ENCODE measurements at regions of chr5 and their contacts with region 1.

Region 1: DNA sequence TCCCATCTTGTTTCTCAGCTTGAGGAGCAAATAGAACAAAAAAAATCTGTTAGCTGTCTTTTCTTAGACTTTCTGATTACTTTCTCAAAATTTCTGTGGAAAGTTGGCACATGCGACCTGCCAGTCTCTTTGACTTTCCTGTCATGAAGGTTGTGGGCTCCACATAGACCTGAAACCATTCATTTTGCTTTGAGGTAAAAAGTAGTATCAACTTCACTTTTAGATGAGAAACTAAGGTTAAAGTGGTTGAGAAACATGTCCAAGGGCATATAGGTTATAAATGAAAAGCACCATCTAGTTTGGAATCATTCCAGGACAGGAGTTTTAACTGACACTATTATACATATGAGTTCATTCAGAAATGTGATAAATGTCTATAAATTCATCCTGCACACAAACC is 42.7 kb downstream of the ST8SIA4 start:
- DNase-seq: no peak
- ATAC-seq: peak; percentile 63
- H3K4me3 ChIP-seq: no peak overlapping the region
- H3K27ac ChIP-seq: peak overlapping the region; percentile 20
- H3K4me1 ChIP-seq: peaks cover 28% of the 10 kb centered on the region
- H3K27me3 ChIP-seq: no peaks in the 10 kb centered on the region
- CTCF ChIP-seq: no peak
- EP300 ChIP-seq: 0 out of 4 replicates have a peak, but pooled peaks of 1 of the 2 experiments have one; percentile 23
- POLR2A ChIP-seq: no peak
- RAD21 ChIP-seq: no peak

Region 2: GRCh38 chr5:100890461-100891008 is 30.1 kb after region 1 on chr5:
- CTCF ChIA-PET with region 1: interaction called, 11 read pairs
- POLR2A ChIA-PET with region 1: interaction called, 10 read pairs
- RAD21 ChIA-PET with region 1: interaction called, 122 read pairs
- SMC1A ChIA-PET with region 1: interaction called, 220 read pairs
- in situ Hi-C with region 1: no loop called
- intact Hi-C with region 1: no loop called
- DNase-seq: peak; percentile 64
- ATAC-seq: peak; percentile 73
- H3K4me3 ChIP-seq: peak overlapping the region; percentile 58
- H3K27ac ChIP-seq: peak overlapping the region; percentile 87
- H3K4me1 ChIP-seq: peaks cover 15% of the 10 kb centered on the region; the same call in 1 of the 2 replicates
- H3K27me3 ChIP-seq: no peaks in the 10 kb centered on the region
- CTCF ChIP-seq: no peak
- EP300 ChIP-seq: peak; percentile 46 to 57; a peak in 2 of 4 replicates
- POLR2A ChIP-seq: no peak
- RAD21 ChIP-seq: 0 out of 2 replicates have a peak, but pooled peaks have one; percentile 2

Region 3: DNA sequence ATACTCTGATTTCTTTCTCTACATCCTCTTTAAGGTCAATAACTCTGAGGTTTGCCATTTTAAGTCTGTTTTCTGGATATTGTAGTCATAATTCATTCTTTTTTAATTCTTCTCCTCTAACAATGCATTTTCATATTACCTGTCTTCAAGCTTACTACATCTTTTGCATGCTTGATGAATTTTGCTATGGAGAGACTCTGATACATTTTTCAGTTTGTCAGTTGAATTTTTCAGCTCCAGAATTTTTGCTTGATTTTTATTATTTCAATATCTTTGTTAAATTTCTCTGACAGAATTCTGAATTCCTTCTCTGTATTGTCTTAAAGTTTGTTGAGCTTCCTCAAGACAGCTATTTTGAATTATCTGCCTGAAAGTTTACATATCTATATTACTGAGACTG is 202.5 kb after region 1 on chr5:
- CTCF ChIA-PET with region 1: no interaction called
- POLR2A ChIA-PET with region 1: no interaction called
- RAD21 ChIA-PET with region 1: no interaction called
- SMC1A ChIA-PET with region 1: no interaction called
- in situ Hi-C with region 1: no loop called
- intact Hi-C with region 1: no loop called
- DNase-seq: no peak
- ATAC-seq: no peak
- H3K4me3 ChIP-seq: no peak overlapping the region
- H3K27ac ChIP-seq: no peak overlapping the region
- H3K4me1 ChIP-seq: no peaks in the 10 kb centered on the region
- H3K27me3 ChIP-seq: no peaks in the 10 kb centered on the region
- CTCF ChIP-seq: no peak
- EP300 ChIP-seq: no peak
- POLR2A ChIP-seq: no peak
- RAD21 ChIP-seq: no peak

Region 4: DNA sequence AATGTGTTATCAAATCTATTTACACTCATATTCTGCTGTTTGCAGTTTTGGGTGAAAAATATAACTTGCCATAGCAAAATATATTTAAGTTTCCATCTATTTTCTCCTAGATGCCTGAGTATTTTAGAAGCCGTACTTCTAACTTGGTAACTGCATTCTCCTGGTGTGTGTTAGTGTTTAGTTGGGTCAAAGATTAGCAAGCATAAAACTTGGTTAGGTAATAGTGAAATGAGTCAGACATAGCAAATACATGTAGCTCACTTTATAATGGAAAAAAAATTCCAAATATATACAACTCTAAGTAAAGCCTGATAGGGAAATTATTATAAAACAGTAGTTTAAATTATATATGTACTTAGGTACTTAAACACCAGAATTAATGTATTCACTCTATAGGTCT is 683.4 kb after region 1 on chr5:
- CTCF ChIA-PET with region 1: no interaction called
- POLR2A ChIA-PET with region 1: no interaction called
- RAD21 ChIA-PET with region 1: no interaction called
- SMC1A ChIA-PET with region 1: no interaction called
- in situ Hi-C with region 1: no loop called
- intact Hi-C with region 1: no loop called
- DNase-seq: no peak
- ATAC-seq: no peak
- H3K4me3 ChIP-seq: no peak overlapping the region
- H3K27ac ChIP-seq: no peak overlapping the region
- H3K4me1 ChIP-seq: no peaks in the 10 kb centered on the region
- H3K27me3 ChIP-seq: no peaks in the 10 kb centered on the region
- CTCF ChIP-seq: no peak
- EP300 ChIP-seq: no peak
- POLR2A ChIP-seq: no peak
- RAD21 ChIP-seq: no peak

Measured in GM12878 (cell line).